ENCODE measurements at regions of chr6 and their contacts with region 1.

Region 1: GRCh38 chr6:132279592-132280139 is 121.6 kb downstream of the MOXD1 start:
- DNase-seq: peak; percentile 54
- H3K4me3 ChIP-seq: peak overlapping the region; percentile 55
- H3K27ac ChIP-seq: no peak overlapping the region
- H3K27me3 ChIP-seq: no peaks in the 10 kb centered on the region
- CTCF ChIP-seq: peak; percentile 76

Region 2: GRCh38 chr6:131937703-131938631 is 341.7 kb before region 1 on chr6:
- CTCF ChIA-PET with region 1: interaction called, 61 read pairs
- POLR2A ChIA-PET with region 1: no interaction called
- DNase-seq: peak; percentile 56
- H3K4me3 ChIP-seq: no peak overlapping the region
- H3K27ac ChIP-seq: peak overlapping the region; percentile 50
- H3K27me3 ChIP-seq: no peaks in the 10 kb centered on the region
- CTCF ChIP-seq: no peak

Region 3: DNA sequence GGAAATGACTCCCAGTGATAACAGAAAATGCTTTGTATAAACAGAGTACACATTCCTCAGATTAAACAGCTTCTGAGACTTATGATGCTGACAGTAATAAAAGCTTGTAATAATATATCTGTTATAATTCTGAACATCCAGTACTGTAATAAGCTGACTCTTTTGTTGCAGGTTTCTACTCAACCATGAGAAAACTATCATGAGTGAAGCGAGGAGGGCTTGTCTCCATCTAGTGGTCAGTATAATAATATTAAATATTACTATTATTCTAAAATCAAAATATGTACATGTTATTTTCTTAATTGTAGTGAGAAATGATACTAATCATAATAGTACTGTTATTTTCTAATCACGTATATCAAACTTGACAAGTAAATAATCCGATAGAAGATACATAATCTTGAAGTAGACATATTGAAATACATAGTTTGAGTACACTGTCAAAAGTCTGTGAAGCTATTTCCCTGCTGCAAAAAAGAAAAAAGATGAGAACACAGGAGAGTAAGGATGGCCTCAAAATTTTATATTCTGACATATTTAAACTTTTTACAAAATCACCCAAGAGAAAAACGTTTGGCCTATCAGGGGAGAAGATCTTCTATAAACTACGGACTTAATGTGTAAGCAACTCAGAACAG is 61.5 kb before region 1 on chr6:
- CTCF ChIA-PET with region 1: interaction called, 12 read pairs
- POLR2A ChIA-PET with region 1: no interaction called
- DNase-seq: peak; percentile 23
- H3K4me3 ChIP-seq: no peak overlapping the region
- H3K27ac ChIP-seq: no peak overlapping the region
- H3K27me3 ChIP-seq: no peaks in the 10 kb centered on the region
- CTCF ChIP-seq: peak; percentile 59

Region 4: GRCh38 chr6:132300323-132300949 is 20.8 kb after region 1 on chr6:
- CTCF ChIA-PET with region 1: interaction called, 212 read pairs
- POLR2A ChIA-PET with region 1: no interaction called
- DNase-seq: peak; percentile 41
- H3K4me3 ChIP-seq: no peak overlapping the region
- H3K27ac ChIP-seq: no peak overlapping the region
- H3K27me3 ChIP-seq: no peaks in the 10 kb centered on the region
- CTCF ChIP-seq: peak; percentile 71

Region 5: GRCh38 chr6:132483779-132484679 is 204.4 kb after region 1 on chr6:
- CTCF ChIA-PET with region 1: interaction called, 298 read pairs
- POLR2A ChIA-PET with region 1: no interaction called
- DNase-seq: peak; percentile 37
- H3K4me3 ChIP-seq: no peak overlapping the region
- H3K27ac ChIP-seq: no peak overlapping the region
- H3K27me3 ChIP-seq: no peaks in the 10 kb centered on the region
- CTCF ChIP-seq: peak; percentile 69

Region 6: DNA sequence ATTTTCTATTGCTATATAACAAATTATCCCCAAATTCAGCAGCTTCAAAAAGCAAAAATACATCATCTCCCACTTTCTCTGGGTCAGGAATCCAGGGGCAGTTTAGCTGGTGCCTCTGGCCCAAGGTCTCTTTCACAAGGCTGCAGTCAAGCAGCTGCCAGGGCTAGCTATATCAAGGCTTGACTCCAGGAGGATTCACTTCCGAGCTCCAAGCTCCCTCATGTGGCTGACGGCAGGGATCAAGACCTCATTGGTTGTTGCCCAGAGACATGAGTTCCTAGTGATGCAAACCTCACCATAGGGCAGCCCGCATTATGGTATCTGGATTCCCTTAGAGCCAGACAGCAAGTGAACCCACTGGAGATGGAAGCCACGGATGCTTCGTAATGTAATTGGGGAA is 435.5 kb after region 1 on chr6:
- CTCF ChIA-PET with region 1: interaction called, 14 read pairs
- POLR2A ChIA-PET with region 1: no interaction called
- DNase-seq: peak; percentile 52
- H3K4me3 ChIP-seq: no peak overlapping the region
- H3K27ac ChIP-seq: no peak overlapping the region
- H3K27me3 ChIP-seq: no peaks in the 10 kb centered on the region
- CTCF ChIP-seq: peak; percentile 61

Region 7: DNA sequence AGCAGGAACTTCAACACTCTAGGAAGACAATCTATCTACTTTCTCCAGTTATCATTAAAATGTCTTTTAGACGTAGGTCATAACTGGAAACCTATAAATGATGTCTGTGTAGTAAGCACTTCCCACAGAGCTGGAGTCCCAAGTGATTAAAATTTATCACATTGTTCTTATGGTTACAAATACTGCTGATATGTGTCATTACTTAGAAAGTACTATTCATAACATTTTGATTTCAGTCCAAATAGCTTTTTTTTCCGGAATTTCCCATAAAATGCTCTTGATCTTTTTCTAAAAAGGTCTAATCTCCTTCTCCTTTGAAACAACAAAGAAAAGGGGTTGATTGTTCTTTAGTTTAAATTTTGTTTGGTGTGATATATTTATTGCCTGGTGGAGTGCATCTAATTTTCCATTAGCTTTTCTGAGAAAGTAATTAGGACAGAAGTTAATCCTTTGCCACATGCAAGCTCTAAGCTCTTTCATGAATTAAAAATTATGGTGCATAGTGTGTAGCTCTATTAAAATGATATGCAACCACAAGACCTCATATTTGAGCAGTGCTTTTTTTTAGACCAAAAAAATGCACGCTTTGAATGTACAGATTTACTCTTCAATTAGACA is 1476.5 kb after region 1 on chr6:
- CTCF ChIA-PET with region 1: no interaction called
- POLR2A ChIA-PET with region 1: no interaction called
- DNase-seq: no peak
- H3K4me3 ChIP-seq: no peak overlapping the region
- H3K27ac ChIP-seq: no peak overlapping the region
- H3K27me3 ChIP-seq: no peaks in the 10 kb centered on the region
- CTCF ChIP-seq: no peak

Measured in AG04450 (cell line).